CD4-positive, alpha-beta T cell (primary cell): ENCODE measurements at regions of chr1 and their contacts with region 1.

Region 1: DNA sequence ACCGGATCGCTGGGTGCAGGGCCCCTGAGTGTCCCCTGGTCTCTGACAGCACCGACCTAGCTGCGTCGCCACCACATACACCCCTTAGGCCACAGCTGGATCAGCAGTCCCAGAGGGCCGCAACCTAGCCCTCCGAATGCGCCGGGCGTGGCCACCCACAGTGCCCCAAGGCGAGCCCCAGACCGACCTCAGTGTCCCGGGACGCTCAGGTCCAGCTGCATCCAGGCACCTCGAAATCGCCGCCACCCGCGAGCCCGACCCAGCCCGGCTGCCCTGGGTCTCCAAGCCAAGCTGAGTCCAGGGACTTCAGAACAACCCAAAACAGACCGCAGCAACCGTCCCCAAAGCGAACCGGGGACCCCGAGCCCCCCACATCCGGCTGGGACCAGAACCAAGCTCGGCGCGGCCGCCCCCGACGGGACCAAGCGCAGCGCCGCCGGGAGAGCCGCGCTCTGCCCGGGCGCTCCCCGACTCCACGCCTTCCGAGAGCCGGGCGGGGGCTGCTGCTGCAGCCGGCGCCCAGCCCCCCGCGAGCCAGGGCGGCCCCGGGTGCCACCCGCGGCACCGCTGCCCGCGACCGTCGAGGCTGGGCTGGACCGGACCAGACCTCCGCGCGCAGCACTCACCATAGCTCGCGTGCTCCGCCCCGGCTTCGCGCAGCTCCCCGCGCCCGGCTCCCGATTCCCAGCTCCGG is 54.6 kb upstream of the ECE1 start:
- DNase-seq: peak in 1 of 14 experiments; percentile 42
- ATAC-seq: peak; percentile 16
- H3K4me3 ChIP-seq: peak overlapping the region; percentile 91
- H3K4me3 Mint-ChIP-seq: peak overlapping the region; percentile 89
- H3K27ac ChIP-seq: no peak overlapping the region
- H3K27ac Mint-ChIP-seq: peak overlapping the region; percentile 86
- H3K4me1 ChIP-seq: peaks cover 63% of the 10 kb centered on the region
- H3K4me1 Mint-ChIP-seq: peaks cover 47% of the 10 kb centered on the region
- H3K27me3 ChIP-seq: no peaks in the 10 kb centered on the region
- H3K27me3 Mint-ChIP-seq: no peaks in the 10 kb centered on the region
- CTCF ChIP-seq: no peak

Region 2: DNA sequence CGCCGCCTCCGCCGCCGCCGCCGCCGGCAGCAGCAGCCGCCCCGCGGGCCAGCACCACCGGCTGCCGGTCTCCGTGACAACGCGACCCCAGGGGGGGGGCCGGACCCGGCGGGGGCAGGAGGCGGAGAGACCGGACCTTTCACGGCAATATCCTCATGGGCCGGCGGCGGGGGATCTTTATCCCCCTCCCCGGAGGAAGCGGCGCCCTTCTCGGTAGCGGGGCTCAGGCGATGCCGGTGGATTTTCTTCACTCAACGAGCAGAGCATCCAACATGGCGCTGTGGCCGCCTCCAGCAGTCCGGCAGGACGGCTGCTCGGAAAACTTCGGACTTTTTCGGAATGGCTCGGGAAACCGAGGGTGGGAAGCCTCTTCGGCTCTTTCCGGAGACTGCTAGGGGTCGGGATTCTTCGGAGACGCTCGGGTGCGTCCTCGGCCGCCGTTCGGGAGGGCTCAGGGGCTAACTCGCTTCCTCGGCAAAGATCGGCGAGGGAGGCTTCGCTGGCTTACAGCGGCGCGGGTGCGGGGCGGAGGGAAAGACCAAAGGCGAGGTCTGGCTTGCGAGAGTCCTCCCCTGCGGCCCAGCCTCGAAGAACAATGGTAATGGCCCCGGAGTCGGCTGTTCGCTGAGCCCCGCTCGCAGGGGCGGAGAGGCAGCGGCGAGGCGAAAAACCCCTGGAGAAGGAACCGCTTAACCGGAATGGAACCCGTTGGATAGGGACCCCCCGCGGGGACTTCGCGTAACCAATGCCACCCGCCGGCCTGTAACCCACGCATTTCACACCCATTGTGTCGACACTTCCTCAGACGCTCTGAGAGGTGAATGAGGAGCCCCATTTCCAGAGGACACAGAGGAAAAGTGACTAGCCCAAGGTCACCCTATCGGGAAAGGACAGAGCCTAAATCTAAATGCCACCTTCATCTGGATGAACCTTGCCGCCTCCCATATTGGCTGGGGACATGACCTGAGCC is 168.0 kb before region 1 on chr1 and contains the start of gene EIF4G3:
- CTCF ChIA-PET with region 1: no interaction called
- POLR2A ChIA-PET with region 1: no interaction called
- intact Hi-C with region 1: loop called in 1 of 2 experiments (anchors 5 kb)
- DNase-seq: peak; percentile 98 to 100 (median 99)
- ATAC-seq: peak; percentile 94
- H3K4me3 ChIP-seq: peak within 1 kb of the TSS; percentile 88
- H3K4me3 Mint-ChIP-seq: peak within 1 kb of the TSS; percentile 89
- H3K27ac ChIP-seq: peak within 1 kb of the TSS; percentile 72 to 75
- H3K27ac Mint-ChIP-seq: peak within 1 kb of the TSS; percentile 85
- H3K4me1 ChIP-seq: peaks cover 17% of the 10 kb centered on the region
- H3K4me1 Mint-ChIP-seq: peaks cover 20% of the 10 kb centered on the region
- H3K27me3 ChIP-seq: no peaks in the 10 kb centered on the region
- H3K27me3 Mint-ChIP-seq: no peaks in the 10 kb centered on the region
- CTCF ChIP-seq: no peak
- total RNA-seq, gene EIF4G3: 18.8 to 21.5 TPM

Region 3: DNA sequence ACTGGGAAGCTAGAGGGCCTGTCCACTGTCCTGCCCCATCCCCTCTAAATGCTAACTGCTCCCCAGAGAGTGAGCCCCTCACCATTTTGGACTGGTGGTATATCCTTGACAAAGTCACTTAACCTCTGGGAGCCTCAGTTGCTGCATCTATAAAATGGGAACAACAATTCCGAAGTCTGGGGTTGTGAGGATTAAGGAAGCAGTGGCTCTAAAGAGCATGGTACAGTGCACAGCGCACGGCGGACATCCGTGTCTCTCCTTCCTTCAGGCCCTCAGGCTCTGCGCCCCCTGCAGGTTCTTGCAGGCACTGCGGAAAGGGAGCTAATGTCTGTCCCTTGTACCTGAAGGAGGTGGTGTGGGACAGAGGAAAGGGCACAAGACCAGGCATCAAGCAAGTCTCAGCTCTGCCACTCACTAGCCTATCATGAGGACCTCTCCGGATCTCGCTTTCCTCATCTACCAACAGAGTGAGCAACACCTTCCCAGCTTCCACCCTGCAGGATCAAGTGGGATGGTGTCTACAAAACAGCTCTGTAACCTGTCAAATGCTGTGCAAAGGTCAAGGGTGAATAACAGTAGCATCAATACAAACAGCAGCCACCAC is 74.7 kb before region 1 on chr1:
- CTCF ChIA-PET with region 1: interaction called, 27 read pairs
- POLR2A ChIA-PET with region 1: interaction called, 11 read pairs
- intact Hi-C with region 1: loop called in 1 of 2 experiments (anchors 5 kb)
- DNase-seq: peak; percentile 78 to 89 (median 84)
- ATAC-seq: peak; percentile 93
- H3K4me3 ChIP-seq: no peak overlapping the region
- H3K4me3 Mint-ChIP-seq: no peak overlapping the region
- H3K27ac ChIP-seq: no peak overlapping the region
- H3K27ac Mint-ChIP-seq: peak overlapping the region; percentile 9
- H3K4me1 ChIP-seq: peaks cover 17% of the 10 kb centered on the region
- H3K4me1 Mint-ChIP-seq: peaks cover 33% of the 10 kb centered on the region
- H3K27me3 ChIP-seq: no peaks in the 10 kb centered on the region
- H3K27me3 Mint-ChIP-seq: no peaks in the 10 kb centered on the region
- CTCF ChIP-seq: peak; percentile 89

Region 4: GRCh38 chr1:21287905-21288514 is 56.9 kb before region 1 on chr1:
- CTCF ChIA-PET with region 1: interaction called, 3 read pairs
- POLR2A ChIA-PET with region 1: interaction called, 114 read pairs
- intact Hi-C with region 1: loop called in 1 of 2 experiments (anchors 5 kb)
- DNase-seq: no peak
- ATAC-seq: no peak
- H3K4me3 ChIP-seq: no peak overlapping the region
- H3K4me3 Mint-ChIP-seq: peak overlapping the region; percentile 74
- H3K27ac ChIP-seq: no peak overlapping the region
- H3K27ac Mint-ChIP-seq: peak overlapping the region; percentile 93
- H3K4me1 ChIP-seq: peaks cover 65% of the 10 kb centered on the region
- H3K4me1 Mint-ChIP-seq: peaks cover 49% of the 10 kb centered on the region
- H3K27me3 ChIP-seq: no peaks in the 10 kb centered on the region
- H3K27me3 Mint-ChIP-seq: no peaks in the 10 kb centered on the region
- CTCF ChIP-seq: no peak

Region 5: DNA sequence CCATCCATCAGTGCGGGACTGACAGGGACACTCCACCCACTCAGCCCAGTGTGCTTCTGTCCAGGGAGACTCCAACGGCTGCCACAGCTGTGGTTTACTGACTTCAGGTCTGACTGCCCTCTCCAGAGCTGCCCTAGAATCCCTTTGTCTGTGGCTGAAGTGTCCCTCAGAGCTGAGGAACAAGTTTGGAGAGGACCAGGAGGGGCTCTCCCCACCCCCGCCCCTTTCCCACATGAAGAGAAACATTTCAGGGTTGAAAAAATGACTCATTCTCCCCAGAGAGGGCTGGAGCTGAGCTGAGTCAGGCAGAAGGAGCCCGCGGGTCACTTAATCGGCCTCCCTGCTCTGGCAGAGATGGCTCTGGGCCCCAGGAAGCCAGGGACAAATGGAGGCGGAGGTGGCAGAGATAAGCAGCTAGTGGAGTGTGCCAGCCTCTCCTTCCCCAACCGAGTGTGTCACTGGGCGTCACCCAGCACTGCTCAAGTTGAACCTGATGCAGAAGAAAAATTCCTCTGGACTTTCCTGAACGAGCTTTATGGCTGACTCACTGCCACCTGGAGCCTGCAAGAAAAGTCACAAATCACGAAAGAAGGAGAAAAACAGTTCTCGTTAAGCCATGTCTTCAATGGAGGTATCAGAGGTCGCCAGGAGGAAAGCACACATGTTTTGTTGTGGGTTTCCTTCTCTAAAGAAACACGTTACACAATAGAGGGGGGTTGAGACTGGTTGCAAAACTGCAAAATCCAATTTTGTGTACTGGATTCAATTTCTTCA is 20.3 kb before region 1 on chr1:
- CTCF ChIA-PET with region 1: interaction called, 6 read pairs
- POLR2A ChIA-PET with region 1: interaction called, 35 read pairs
- intact Hi-C with region 1: loop called in 1 of 2 experiments (anchors 2 kb)
- DNase-seq: peak in 12 of 14 experiments; percentile 35 to 83 (median 52)
- ATAC-seq: peak; percentile 65
- H3K4me3 ChIP-seq: peak overlapping the region; percentile 24
- H3K4me3 Mint-ChIP-seq: peak overlapping the region; percentile 70
- H3K27ac ChIP-seq: peak overlapping the region; percentile 73 to 76
- H3K27ac Mint-ChIP-seq: peak overlapping the region; percentile 93
- H3K4me1 ChIP-seq: peaks cover 77% of the 10 kb centered on the region
- H3K4me1 Mint-ChIP-seq: peaks cover 88% of the 10 kb centered on the region
- H3K27me3 ChIP-seq: no peaks in the 10 kb centered on the region
- H3K27me3 Mint-ChIP-seq: no peaks in the 10 kb centered on the region
- CTCF ChIP-seq: no peak

Region 6: GRCh38 chr1:21334214-21335087 is 10.4 kb before region 1 on chr1:
- CTCF ChIA-PET with region 1: interaction called, 7 read pairs
- POLR2A ChIA-PET with region 1: interaction called, 62 read pairs
- intact Hi-C with region 1: no loop called
- DNase-seq: peak; percentile 60 to 96 (median 74)
- ATAC-seq: peak; percentile 80
- H3K4me3 ChIP-seq: peak overlapping the region; percentile 50
- H3K4me3 Mint-ChIP-seq: peak overlapping the region; percentile 92
- H3K27ac ChIP-seq: peak overlapping the region; percentile 81 to 89
- H3K27ac Mint-ChIP-seq: peak overlapping the region; percentile 98
- H3K4me1 ChIP-seq: peaks cover 97% of the 10 kb centered on the region
- H3K4me1 Mint-ChIP-seq: peaks cover 89% of the 10 kb centered on the region
- H3K27me3 ChIP-seq: no peaks in the 10 kb centered on the region
- H3K27me3 Mint-ChIP-seq: no peaks in the 10 kb centered on the region
- CTCF ChIP-seq: peak; percentile 66

Region 7: DNA sequence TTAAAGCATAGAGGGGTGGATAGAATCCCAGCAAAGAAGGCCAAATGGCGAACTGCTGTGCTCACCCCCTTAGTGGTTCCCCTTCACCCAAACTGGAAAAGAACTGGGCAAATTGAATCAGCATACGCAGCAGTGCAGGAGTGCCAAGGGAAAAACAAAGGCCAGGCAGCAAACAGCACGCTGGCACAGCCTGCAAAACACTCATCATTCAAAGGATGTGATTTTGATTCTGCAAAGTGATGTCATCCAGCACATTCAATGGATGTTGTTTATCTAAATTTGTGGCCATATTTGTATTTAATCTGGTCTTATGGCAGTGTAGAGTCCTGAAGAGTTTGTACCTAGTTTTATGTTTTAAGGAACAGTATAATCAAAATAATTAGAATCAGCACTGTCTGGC is 17.2 kb after region 1 on chr1:
- CTCF ChIA-PET with region 1: no interaction called
- POLR2A ChIA-PET with region 1: no interaction called
- intact Hi-C with region 1: no loop called
- DNase-seq: no peak
- ATAC-seq: no peak
- H3K4me3 ChIP-seq: no peak overlapping the region
- H3K4me3 Mint-ChIP-seq: no peak overlapping the region
- H3K27ac ChIP-seq: no peak overlapping the region
- H3K27ac Mint-ChIP-seq: no peak overlapping the region
- H3K4me1 ChIP-seq: no peaks in the 10 kb centered on the region
- H3K4me1 Mint-ChIP-seq: peaks cover 4% of the 10 kb centered on the region
- H3K27me3 ChIP-seq: no peaks in the 10 kb centered on the region
- H3K27me3 Mint-ChIP-seq: no peaks in the 10 kb centered on the region
- CTCF ChIP-seq: no peak

Region 8: DNA sequence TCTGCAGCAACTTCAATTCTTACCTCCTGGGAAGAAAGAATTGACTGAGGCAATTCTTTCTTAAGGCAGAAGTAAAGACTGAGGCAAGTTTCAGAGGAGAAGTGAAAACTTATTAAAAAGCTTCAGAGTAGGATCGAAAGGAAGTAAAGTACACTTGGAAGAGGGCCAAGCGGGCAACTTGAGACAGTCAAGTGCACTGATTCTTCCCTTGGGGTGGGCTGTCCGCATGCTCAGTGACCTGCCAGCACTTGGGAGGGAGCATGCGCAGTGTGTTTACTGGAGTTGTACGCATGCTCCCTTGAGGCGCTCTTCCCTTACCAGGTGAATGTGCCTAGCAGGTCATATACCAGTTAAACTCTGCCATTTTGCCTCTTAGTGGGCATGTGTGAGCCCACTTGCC is 39.7 kb after region 1 on chr1:
- CTCF ChIA-PET with region 1: no interaction called
- POLR2A ChIA-PET with region 1: no interaction called
- intact Hi-C with region 1: no loop called
- DNase-seq: no peak
- ATAC-seq: no peak
- H3K4me3 ChIP-seq: no peak overlapping the region
- H3K4me3 Mint-ChIP-seq: no peak overlapping the region
- H3K27ac ChIP-seq: no peak overlapping the region
- H3K27ac Mint-ChIP-seq: no peak overlapping the region
- H3K4me1 ChIP-seq: no peaks in the 10 kb centered on the region
- H3K4me1 Mint-ChIP-seq: no peaks in the 10 kb centered on the region
- H3K27me3 ChIP-seq: no peaks in the 10 kb centered on the region
- H3K27me3 Mint-ChIP-seq: peaks cover 23% of the 10 kb centered on the region
- CTCF ChIP-seq: no peak

Region 9: GRCh38 chr1:21439721-21440629 is 95.1 kb after region 1 on chr1 and contains the start of gene NBPF3:
- CTCF ChIA-PET with region 1: no interaction called
- POLR2A ChIA-PET with region 1: no interaction called
- intact Hi-C with region 1: loop called in 1 of 2 experiments (anchors 5 kb)
- DNase-seq: peak; percentile 77 to 92 (median 85)
- ATAC-seq: peak; percentile 99
- H3K4me3 ChIP-seq: peak within 1 kb of the TSS; percentile 66
- H3K4me3 Mint-ChIP-seq: peak within 1 kb of the TSS; percentile 97
- H3K27ac ChIP-seq: peak within 1 kb of the TSS in 1 of 2 donors; percentile 21
- H3K27ac Mint-ChIP-seq: peak within 1 kb of the TSS; percentile 95
- H3K4me1 ChIP-seq: peaks cover 19% of the 10 kb centered on the region
- H3K4me1 Mint-ChIP-seq: peaks cover 21% of the 10 kb centered on the region
- H3K27me3 ChIP-seq: peaks cover 0 to 13% of the 10 kb centered on the region in 2 experiments
- H3K27me3 Mint-ChIP-seq: no peaks in the 10 kb centered on the region
- CTCF ChIP-seq: no peak
- total RNA-seq, gene NBPF3: 8.2 to 8.5 TPM